ENCODE measurements at regions of chr11 and their contacts with region 1.

Region 1: DNA sequence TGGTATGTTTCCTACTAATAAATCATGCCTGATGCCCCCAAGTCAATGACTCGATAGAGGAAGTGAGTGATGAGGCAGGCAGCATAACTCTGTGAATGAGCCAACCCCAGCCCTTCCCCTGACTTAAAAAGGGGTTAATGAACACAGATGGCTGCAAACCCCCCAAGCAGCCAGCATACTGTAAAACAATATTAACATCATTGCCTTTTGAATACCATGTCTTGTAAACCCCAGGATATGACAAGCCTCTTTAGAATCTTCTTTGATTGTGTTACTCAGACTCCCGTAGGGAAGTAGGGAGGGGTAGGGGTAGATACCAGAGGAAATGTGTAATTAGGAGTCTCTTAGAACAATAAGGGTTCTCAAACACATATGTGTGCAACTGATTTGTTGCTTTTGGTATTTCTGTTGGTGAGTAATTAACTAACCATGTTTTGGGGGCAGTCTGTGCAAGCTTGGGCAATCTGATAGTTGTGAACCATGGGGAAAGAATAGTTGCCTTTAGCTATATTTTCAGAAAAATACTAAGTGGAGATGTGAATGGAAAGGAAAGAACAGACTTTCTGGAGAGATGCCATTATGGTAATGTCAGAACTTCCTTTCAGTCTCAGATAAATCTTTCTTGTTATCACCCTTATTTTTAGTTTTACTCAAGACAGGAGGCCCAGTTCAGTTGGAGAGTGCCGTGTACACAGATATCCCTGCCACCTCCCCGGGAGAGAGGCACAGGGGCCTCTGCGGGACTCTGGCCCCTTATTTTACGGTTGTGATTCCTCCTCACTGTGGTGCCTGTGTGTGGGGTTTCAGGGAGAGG is 701.8 kb downstream of the NTM start:
- DNase-seq: peak; percentile 96
- H3K4me3 ChIP-seq: no peak overlapping the region
- H3K27ac ChIP-seq: peak overlapping the region; percentile 99
- H3K4me1 ChIP-seq: peaks cover 32% of the 10 kb centered on the region
- H3K27me3 ChIP-seq: no peaks in the 10 kb centered on the region
- CTCF ChIP-seq: no peak
- POLR2A ChIP-seq: peak; percentile 68

Region 2: DNA sequence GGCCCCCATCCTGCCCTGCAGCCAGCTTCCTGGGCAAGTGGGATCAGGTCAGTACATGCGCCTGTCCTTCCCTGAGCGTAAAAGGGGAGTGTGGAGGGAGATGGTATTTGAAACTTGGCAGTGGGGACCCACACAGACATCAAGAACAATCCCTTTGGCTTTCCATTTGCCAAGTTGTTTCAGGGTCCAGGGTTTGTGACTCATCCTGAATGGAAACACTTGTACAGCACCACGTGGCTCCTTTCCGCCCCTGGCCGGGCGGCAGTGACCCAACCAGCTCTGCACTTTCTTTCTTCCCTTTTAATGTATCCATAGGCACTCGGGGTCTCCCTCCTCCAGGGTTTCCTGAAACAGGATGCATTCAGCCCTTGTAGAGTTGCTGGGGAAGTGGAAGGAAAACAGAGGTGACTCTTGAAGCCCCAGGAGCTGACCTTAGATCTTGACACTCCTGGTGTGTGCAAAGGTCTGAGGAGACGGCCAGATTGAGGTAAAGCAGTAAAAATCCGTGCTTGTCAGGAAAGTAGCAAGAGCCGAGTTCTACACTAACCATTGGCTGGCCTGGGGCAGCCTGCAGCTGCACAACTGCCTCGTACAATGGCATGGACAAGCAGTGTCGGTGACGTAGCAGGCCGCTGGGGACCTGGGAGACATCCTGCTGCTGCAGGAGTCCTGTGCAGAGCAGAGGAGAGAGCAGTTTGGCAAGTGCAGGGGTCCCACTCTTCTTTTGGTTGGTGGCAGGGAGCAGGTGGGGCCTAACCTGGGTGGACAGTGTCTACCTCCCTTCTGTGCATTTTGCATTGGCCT is 1345.8 kb before region 1 on chr11:
- CTCF ChIA-PET with region 1: no interaction called
- POLR2A ChIA-PET with region 1: no interaction called
- dilution Hi-C with region 1: no loop called
- intact Hi-C with region 1: loop called (anchors 5 kb)
- DNase-seq: peak; percentile 85
- H3K4me3 ChIP-seq: no peak overlapping the region
- H3K27ac ChIP-seq: peak overlapping the region; percentile 34
- H3K4me1 ChIP-seq: peaks cover 24% of the 10 kb centered on the region
- H3K27me3 ChIP-seq: no peaks in the 10 kb centered on the region
- CTCF ChIP-seq: no peak
- POLR2A ChIP-seq: no peak

Region 3: GRCh38 chr11:131712897-131713296 is 359.4 kb before region 1 on chr11:
- CTCF ChIA-PET with region 1: no interaction called
- POLR2A ChIA-PET with region 1: no interaction called
- dilution Hi-C with region 1: no loop called
- intact Hi-C with region 1: loop called (anchors 1 kb)
- DNase-seq: peak; percentile 72
- H3K4me3 ChIP-seq: no peak overlapping the region
- H3K27ac ChIP-seq: peak overlapping the region; percentile 86
- H3K4me1 ChIP-seq: peaks cover 12% of the 10 kb centered on the region
- H3K27me3 ChIP-seq: no peaks in the 10 kb centered on the region
- CTCF ChIP-seq: no peak
- POLR2A ChIP-seq: no peak

Region 4: DNA sequence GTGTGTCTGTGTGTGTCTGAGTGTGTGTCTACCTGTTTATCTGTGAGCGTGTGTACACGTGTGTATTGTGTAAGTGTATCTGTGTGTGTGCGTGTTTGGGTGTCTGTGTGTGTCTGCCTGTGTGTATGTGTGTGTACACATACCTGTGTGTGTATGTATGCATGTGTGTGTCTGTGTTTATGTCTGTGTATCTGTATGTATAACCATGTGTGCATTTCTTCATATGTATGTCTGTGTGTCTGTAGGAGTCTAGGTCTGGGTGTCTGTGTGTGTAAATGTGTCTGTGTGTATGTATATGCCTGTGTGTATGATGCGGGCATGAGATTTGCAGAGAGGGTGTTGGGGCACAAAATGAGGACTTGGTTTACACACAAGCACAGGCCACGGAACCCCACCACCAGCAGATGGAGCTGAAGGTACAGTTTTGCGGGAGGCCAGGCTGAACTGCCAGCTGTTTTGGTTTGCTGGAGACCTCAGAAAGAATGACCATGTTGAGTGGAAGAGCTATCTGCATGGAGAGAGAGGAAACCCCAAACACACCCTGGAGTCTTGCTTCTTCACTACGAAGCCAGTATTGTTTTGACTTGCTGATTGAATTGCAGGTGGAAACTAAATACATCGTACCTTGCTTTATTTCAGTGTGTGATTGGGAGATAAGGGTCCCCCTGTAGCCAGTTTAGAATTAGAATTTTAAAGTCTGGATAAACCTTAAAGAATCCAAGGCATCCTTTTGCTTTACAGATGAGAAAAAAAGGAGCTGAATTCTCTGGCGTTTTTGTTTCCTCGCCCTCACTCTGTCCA is 204.6 kb before region 1 on chr11:
- CTCF ChIA-PET with region 1: interaction called, 7 read pairs
- POLR2A ChIA-PET with region 1: no interaction called
- dilution Hi-C with region 1: no loop called
- intact Hi-C with region 1: loop called (anchors 2 kb)
- DNase-seq: peak; percentile 80
- H3K4me3 ChIP-seq: no peak overlapping the region
- H3K27ac ChIP-seq: no peak overlapping the region
- H3K4me1 ChIP-seq: peaks cover 36% of the 10 kb centered on the region
- H3K27me3 ChIP-seq: no peaks in the 10 kb centered on the region
- CTCF ChIP-seq: peak; percentile 85 to 88
- POLR2A ChIP-seq: no peak

Region 5: GRCh38 chr11:131910523-131911387 is 161.5 kb before region 1 on chr11:
- CTCF ChIA-PET with region 1: interaction called, 3 read pairs
- POLR2A ChIA-PET with region 1: no interaction called
- dilution Hi-C with region 1: no loop called
- intact Hi-C with region 1: loop called (anchors 1 kb)
- DNase-seq: peak; percentile 43
- H3K4me3 ChIP-seq: peak overlapping the region; percentile 49 to 76 (median 64)
- H3K27ac ChIP-seq: peak overlapping the region; percentile 19
- H3K4me1 ChIP-seq: peaks cover 5% of the 10 kb centered on the region
- H3K27me3 ChIP-seq: peaks cover 0 to 10% of the 10 kb centered on the region in 2 experiments
- CTCF ChIP-seq: no peak
- POLR2A ChIP-seq: no peak

Region 6: DNA sequence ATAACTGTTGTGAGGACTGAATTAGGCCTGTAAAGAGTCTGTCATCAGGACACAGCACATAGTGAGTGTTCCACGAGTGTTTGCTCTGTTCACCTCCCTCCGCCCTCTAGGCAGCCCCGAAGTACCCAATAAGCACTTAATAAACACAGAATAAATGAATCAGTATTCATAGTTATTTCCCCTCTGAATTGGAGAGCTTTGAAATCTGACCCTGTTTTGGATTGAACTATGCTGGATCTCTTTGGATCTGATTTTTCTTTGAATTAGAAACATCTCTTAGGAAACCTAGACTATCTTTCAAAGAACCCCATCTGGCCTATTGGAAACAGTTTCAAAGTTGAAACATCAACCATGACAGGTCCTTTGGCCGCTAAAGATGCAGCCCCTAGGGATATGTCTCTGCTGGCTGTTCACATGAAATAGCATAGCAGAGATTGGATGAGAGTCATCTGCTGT is 86.4 kb before region 1 on chr11:
- CTCF ChIA-PET with region 1: no interaction called
- POLR2A ChIA-PET with region 1: no interaction called
- dilution Hi-C with region 1: no loop called
- intact Hi-C with region 1: no loop called
- DNase-seq: no peak
- H3K4me3 ChIP-seq: no peak overlapping the region
- H3K27ac ChIP-seq: no peak overlapping the region
- H3K4me1 ChIP-seq: no peaks in the 10 kb centered on the region
- H3K27me3 ChIP-seq: no peaks in the 10 kb centered on the region
- CTCF ChIP-seq: no peak
- POLR2A ChIP-seq: no peak

Region 7: DNA sequence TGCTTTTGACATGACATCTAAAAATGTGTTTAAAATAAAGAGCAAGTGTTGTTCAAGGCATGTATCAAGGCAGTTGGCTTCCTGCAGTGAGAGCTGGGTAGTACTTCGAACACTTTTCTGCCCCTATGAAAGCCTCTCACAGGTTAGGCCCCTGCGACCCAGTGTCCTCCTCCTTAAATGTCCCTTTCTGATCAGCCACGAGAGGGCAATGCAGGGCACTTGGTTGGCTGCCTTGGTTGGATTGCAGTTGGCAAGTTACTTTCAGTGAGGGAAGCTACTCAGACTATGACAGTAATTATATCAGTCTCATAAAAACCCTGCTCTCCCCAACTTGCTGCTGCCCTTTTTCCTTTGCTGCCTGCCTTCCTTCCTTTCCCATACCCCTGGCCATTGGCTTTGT is 41.9 kb after region 1 on chr11:
- CTCF ChIA-PET with region 1: interaction called, 7 read pairs
- POLR2A ChIA-PET with region 1: no interaction called
- dilution Hi-C with region 1: no loop called
- intact Hi-C with region 1: loop called (anchors 5 kb)
- DNase-seq: peak; percentile 44
- H3K4me3 ChIP-seq: no peak overlapping the region
- H3K27ac ChIP-seq: no peak overlapping the region
- H3K4me1 ChIP-seq: peaks cover 9% of the 10 kb centered on the region
- H3K27me3 ChIP-seq: no peaks in the 10 kb centered on the region
- CTCF ChIP-seq: peak in 1 of 2 donors; percentile 53
- POLR2A ChIP-seq: no peak